Calu3 (cell line): ENCODE measurements at regions of chr2 and their contacts with region 1.

Region 1: GRCh38 chr2:202084265-202084664 is 11.2 kb downstream of the KIAA2012 start:
- DNase-seq: no peak
- H3K4me3 Mint-ChIP-seq: no peak overlapping the region
- H3K27ac Mint-ChIP-seq: no peak overlapping the region
- H3K4me1 Mint-ChIP-seq: peaks cover 15% of the 10 kb centered on the region
- H3K27me3 Mint-ChIP-seq: peaks cover 11% of the 10 kb centered on the region
- CTCF ChIP-seq: no peak

Region 2: GRCh38 chr2:201900362-201900761 is 183.9 kb before region 1 on chr2:
- CTCF ChIA-PET with region 1: interaction called, 10 read pairs
- intact Hi-C with region 1: no loop called
- DNase-seq: peak; percentile 32
- H3K4me3 Mint-ChIP-seq: no peak overlapping the region
- H3K27ac Mint-ChIP-seq: peak overlapping the region; percentile 11
- H3K4me1 Mint-ChIP-seq: peaks cover 19% of the 10 kb centered on the region
- H3K27me3 Mint-ChIP-seq: peaks cover 39% of the 10 kb centered on the region
- CTCF ChIP-seq: no peak